ENCODE measurements at regions of chr11 and their contacts with region 1.

Region 1: DNA sequence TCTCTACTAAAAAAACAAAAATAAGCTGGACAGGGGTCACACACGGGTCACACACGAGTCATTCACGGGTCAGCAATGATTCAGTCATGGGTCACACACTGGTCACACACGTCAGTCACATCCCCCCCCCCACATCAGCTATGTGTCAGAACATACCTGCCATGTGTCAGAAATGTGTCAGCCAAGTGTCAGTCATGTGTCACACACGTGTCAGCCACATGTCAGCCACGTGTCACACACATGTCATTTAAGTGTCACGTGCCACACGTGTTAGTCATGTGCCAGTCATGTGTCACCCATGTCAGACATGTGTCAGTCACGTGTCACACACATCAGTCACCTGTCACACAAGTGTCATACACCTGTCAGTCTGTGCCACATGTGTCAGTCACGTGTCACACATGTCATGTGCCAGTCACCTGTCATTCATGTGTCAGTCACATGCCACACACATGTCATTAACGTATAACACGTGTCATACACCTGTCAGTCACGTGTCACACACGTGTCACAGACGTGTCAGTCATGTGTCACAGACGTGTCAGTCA is 28.7 kb upstream of the MMP20 start:
- DNase-seq: no peak
- ATAC-seq: no peak
- H3K4me3 ChIP-seq: no peak overlapping the region
- H3K27ac ChIP-seq: no peak overlapping the region
- H3K4me1 ChIP-seq: no peaks in the 10 kb centered on the region
- H3K27me3 ChIP-seq: no peaks in the 10 kb centered on the region

Region 2: GRCh38 chr11:102560555-102561011 is 93.2 kb before region 1 on chr11:
- intact Hi-C with region 1: no loop called
- DNase-seq: no peak
- ATAC-seq: peak in 1 of 2 donors; percentile 64
- H3K4me3 ChIP-seq: peak overlapping the region; percentile 38
- H3K27ac ChIP-seq: no peak overlapping the region
- H3K4me1 ChIP-seq: no peaks in the 10 kb centered on the region
- H3K27me3 ChIP-seq: no peaks in the 10 kb centered on the region

Region 3: GRCh38 chr11:102623998-102624397 is 29.8 kb before region 1 on chr11:
- intact Hi-C with region 1: loop called in 1 of 4 experiments (anchors 2 kb)
- DNase-seq: no peak
- ATAC-seq: no peak
- H3K4me3 ChIP-seq: no peak overlapping the region
- H3K27ac ChIP-seq: no peak overlapping the region
- H3K4me1 ChIP-seq: no peaks in the 10 kb centered on the region
- H3K27me3 ChIP-seq: no peaks in the 10 kb centered on the region

Region 4: DNA sequence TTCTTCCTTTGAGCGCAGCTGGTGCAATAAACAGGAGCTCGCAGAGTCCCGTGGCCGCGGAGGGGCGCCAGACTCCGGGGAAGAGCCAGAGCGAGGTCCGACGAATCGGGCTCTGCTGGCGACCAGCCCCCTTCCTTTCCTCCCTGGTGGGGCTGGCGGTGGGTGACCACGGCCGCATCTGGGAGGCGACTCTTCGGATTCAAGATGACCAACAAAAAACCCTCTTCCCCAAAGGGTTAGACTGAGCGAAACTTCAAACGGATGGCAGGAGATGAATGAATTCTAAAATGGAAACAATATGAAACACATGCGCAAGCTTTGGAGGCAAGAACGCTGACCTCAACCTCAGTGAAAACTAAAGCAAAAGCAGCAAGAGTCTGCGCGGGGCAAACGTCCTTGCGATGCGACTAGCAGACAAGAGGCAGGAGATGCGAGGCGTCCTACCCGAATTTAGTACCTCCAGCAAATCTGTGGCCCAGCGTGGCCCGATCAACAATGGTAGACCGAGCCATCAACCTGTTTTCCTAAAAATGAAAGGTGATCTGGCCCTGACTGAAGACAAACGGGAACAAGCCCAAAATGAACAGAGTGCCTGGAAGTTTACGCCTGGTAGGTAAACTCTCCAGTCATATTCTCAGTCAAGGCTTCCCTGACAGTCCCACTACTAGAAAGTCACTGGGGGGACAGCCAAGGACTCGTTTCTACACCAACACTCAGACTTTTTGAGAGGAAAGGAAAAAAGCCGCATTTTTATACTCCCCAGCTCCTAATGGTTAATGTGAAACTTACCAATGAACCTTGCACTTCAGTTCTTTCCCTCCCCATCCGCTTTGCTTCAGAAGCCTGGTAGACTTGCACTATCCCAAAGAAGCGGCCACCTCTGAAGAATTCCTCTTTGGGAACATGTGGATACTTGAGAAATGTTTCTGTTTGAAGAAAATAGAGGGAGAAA is 177.9 kb after region 1 on chr11:
- intact Hi-C with region 1: no loop called
- DNase-seq: peak; percentile 12 to 68 (median 39)
- ATAC-seq: no peak
- H3K4me3 ChIP-seq: no peak overlapping the region
- H3K27ac ChIP-seq: no peak overlapping the region
- H3K4me1 ChIP-seq: no peaks in the 10 kb centered on the region
- H3K27me3 ChIP-seq: no peaks in the 10 kb centered on the region

Measured in right cardiac atrium (tissue), 5 donors.